ENCODE measurements at regions of chr15 and their contacts with region 1.

Region 1: DNA sequence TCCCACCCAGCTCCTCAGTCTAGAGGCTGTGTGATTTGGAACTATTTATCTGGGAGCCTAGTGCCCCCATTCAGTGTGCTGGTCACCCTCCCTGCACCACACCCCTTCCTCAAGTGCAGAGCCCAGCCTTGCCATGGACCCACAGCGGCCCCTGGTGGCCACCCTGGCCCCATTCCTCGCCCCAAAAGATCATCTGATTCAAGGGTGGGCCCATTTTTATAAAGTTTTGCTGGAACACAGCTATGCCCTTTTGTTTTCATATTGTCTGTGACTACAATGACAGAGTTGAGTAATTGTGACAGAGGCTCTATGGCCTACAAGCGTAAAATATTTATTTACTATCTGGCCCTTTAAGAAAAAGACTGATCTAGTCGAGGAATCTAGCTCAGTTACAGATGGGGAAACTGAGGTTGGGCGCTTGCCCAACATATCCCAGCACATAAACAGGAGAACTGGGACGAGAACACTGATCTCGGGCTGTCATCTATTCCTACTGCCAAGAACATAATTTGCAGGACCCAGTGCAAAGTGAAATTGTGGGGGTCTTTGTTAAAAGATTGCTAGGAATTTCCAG is 1.8 kb downstream of the FES start:
- DNase-seq: peak; percentile 71
- H3K4me3 ChIP-seq: no peak overlapping the region
- H3K27ac ChIP-seq: peak overlapping the region; percentile 21 to 97
- H3K4me1 ChIP-seq: peaks cover 31% of the 10 kb centered on the region
- H3K27me3 ChIP-seq: no peaks in the 10 kb centered on the region
- CTCF ChIP-seq: peak; percentile 88 to 93 (median 92)
- POLR2A ChIP-seq: no peak

Region 2: GRCh38 chr15:90648137-90649070 is 237.7 kb before region 1 on chr15:
- intact Hi-C with region 1: loop called (anchors 10 kb)
- DNase-seq: peak; percentile 84
- H3K4me3 ChIP-seq: no peak overlapping the region
- H3K27ac ChIP-seq: no peak overlapping the region
- H3K4me1 ChIP-seq: peaks cover 5% of the 10 kb centered on the region
- H3K27me3 ChIP-seq: no peaks in the 10 kb centered on the region
- CTCF ChIP-seq: peak; percentile 58 to 91 (median 84)
- POLR2A ChIP-seq: no peak

Region 3: GRCh38 chr15:90789462-90789861 is 96.7 kb before region 1 on chr15:
- intact Hi-C with region 1: no loop called
- DNase-seq: no peak
- H3K4me3 ChIP-seq: no peak overlapping the region
- H3K27ac ChIP-seq: no peak overlapping the region
- H3K4me1 ChIP-seq: no peaks in the 10 kb centered on the region
- H3K27me3 ChIP-seq: no peaks in the 10 kb centered on the region
- CTCF ChIP-seq: no peak
- POLR2A ChIP-seq: no peak

Measured in testis (tissue), 5 donors.